CD4-positive, alpha-beta memory T cell (primary cell): ENCODE measurements at regions of chr20 and their contacts with region 1.

Region 1: DNA sequence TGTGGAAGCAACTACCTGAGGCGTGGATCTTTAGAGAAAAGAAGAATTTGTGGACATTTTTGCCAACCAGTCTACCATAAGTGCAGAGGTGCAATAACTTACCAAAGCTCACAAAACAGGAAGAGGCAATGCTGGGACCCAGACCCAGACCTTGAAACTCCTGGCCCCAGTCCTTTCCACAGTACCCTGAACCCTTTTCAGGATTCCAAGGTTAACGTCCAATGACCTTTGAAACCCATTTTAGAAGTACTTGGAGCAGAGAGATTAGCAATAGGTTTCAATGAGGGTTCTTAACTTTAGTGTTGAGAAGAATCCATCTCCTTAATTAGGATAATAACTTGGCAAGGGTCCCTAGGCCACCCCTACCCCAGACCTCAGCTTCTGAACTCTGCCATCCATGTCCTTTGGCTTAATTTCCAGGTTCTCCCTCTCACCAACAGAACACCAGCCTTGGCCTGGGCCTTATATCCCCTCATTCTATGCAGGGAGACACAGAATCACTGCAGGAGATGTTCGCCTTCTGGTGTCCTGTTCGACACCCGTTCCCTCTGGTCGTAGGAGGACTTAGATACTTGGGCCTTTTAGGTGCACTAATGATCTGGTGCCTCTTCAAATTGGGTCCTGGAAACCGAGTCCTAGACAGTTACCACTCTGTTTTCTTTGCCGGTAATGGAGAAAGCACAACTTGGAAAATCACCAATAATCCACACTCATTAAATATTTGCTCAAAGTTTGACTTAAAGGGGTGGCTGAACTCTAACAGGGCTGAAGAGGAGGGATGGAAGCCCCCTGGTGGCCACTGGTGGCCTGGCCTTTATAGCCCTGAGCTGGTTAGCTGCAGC is 40.6 kb downstream of the ISM1 start:
- DNase-seq: peak; percentile 58 to 66 (median 63)
- H3K4me3 ChIP-seq: no peak overlapping the region
- H3K4me3 Mint-ChIP-seq: no peak overlapping the region
- H3K27ac ChIP-seq: no peak overlapping the region
- H3K27ac Mint-ChIP-seq: peak overlapping the region in 1 of 7 donors; percentile 54
- H3K4me1 ChIP-seq: no peaks in the 10 kb centered on the region
- H3K4me1 Mint-ChIP-seq: peaks cover 7 to 14% (median 12%) of the 10 kb centered on the region in 4 donors
- H3K27me3 ChIP-seq: no peaks in the 10 kb centered on the region
- H3K27me3 Mint-ChIP-seq: peaks cover 0 to 1% of the 10 kb centered on the region in 2 donors

Region 2: DNA sequence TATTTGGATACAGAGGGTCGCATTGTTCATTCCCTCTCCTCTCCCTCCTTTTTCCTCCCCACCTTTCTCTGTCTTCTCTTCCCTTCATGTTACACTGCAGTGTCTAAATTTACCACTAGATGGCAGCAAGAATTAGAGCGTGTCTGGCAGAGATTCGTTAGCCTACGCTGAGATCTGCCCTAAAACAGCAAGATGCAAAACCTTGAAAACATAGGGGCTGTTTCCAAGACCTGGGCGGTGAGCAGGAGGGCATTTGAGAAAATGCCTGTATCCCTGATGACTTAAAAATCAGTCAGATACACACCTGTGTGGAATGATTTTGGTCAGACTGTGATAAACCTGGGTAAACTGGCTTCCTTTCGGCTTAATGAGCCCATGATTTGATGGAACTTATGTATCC is 142.1 kb before region 1 on chr20:
- CTCF ChIA-PET with region 1: interaction called, 146 read pairs
- POLR2A ChIA-PET with region 1: no interaction called
- intact Hi-C with region 1: loop called (anchors 1 kb)
- DNase-seq: peak; percentile 38 to 65 (median 63)
- H3K4me3 ChIP-seq: no peak overlapping the region
- H3K4me3 Mint-ChIP-seq: no peak overlapping the region
- H3K27ac ChIP-seq: no peak overlapping the region
- H3K27ac Mint-ChIP-seq: peak overlapping the region in 1 of 7 donors; percentile 7
- H3K4me1 ChIP-seq: no peaks in the 10 kb centered on the region
- H3K4me1 Mint-ChIP-seq: peaks cover 0 to 2% (median 0%) of the 10 kb centered on the region in 4 donors
- H3K27me3 ChIP-seq: no peaks in the 10 kb centered on the region
- H3K27me3 Mint-ChIP-seq: peaks cover 0 to 2% of the 10 kb centered on the region in 2 donors

Region 3: GRCh38 chr20:13221673-13222318 is 39.9 kb before region 1 on chr20:
- CTCF ChIA-PET with region 1: interaction called, 5 read pairs
- POLR2A ChIA-PET with region 1: interaction called, 5 read pairs
- intact Hi-C with region 1: loop called (anchors 1 kb)
- DNase-seq: peak; percentile 73 to 80 (median 78)
- H3K4me3 ChIP-seq: peak overlapping the region; percentile 52 to 60
- H3K4me3 Mint-ChIP-seq: peak overlapping the region; percentile 85 to 95 (median 88)
- H3K27ac ChIP-seq: peak overlapping the region; percentile 43
- H3K27ac Mint-ChIP-seq: peak overlapping the region; percentile 71 to 93 (median 89)
- H3K4me1 ChIP-seq: peaks cover 20% of the 10 kb centered on the region
- H3K4me1 Mint-ChIP-seq: peaks cover 7 to 31% (median 16%) of the 10 kb centered on the region in 4 donors
- H3K27me3 ChIP-seq: peaks cover 12% of the 10 kb centered on the region
- H3K27me3 Mint-ChIP-seq: peaks cover 6 to 20% of the 10 kb centered on the region in 2 donors

Region 4: DNA sequence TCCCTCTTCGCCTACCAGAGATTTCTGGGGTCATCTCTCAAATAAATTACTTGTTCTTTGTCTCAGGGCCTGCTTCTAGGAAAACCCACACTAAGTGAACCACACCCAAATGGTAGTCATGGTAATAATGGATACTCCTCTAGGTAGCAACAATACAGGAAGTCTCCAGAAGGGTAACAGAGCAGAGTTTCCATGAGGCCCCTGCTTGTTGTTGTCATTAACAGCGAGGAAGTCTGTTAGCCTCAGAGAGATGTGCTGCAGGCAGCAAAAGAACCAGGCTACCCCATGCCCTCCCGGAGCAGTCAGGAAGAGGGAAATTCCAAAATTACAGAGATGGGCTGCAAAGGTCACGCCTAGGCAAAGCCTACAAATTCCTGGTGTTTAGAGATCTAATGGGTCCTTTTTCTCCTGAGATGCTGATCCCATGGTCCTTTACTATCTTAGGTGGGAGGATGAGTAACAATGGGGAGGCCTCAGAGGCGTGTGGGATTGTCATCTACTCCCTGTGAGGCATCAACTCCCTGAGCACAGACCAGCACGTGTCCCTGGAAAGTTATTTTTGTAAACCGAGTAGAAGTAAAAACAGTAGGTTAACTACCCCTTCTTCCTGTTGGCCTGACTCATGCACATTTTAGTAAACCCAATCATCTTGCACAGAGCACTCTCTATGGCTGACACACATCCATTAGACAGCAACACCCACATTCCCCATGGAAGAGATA is 30.5 kb before region 1 on chr20:
- CTCF ChIA-PET with region 1: interaction called, 5 read pairs
- POLR2A ChIA-PET with region 1: no interaction called
- intact Hi-C with region 1: loop called (anchors 1 kb)
- DNase-seq: peak; percentile 68 to 86 (median 83)
- H3K4me3 ChIP-seq: peak overlapping the region in 1 of 2 donors; percentile 13
- H3K4me3 Mint-ChIP-seq: peak overlapping the region; percentile 32 to 83 (median 68)
- H3K27ac ChIP-seq: peak overlapping the region; percentile 83
- H3K27ac Mint-ChIP-seq: peak overlapping the region; percentile 89 to 99 (median 98)
- H3K4me1 ChIP-seq: peaks cover 44% of the 10 kb centered on the region
- H3K4me1 Mint-ChIP-seq: peaks cover 39 to 48% (median 43%) of the 10 kb centered on the region in 4 donors
- H3K27me3 ChIP-seq: no peaks in the 10 kb centered on the region
- H3K27me3 Mint-ChIP-seq: no peaks in the 10 kb centered on the region

Region 5: DNA sequence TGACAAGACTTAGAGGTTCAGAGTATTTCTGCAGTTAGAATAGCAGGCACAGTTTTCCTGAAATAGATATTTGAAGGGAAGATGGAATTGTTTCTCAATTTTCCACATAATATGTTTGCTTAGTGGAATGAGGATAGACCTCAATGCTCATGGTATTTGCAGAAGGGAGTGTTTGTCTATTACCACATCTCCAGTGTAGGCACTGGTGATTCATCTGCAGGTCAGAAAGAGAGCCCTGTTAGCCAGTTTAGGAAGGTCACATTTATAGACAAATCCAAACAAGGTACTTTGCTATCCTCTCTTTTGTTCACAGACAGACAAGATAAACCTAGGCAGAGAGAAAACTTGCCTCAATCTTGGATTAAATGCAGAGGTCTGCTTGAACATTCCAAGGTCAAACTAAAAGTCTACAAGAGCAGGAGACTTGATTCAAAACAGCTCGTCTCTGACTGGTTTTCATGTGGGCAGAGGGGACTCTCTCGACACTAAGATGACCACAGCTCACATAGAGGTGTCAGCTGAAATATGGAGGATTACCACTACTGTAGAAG is 17.8 kb before region 1 on chr20:
- CTCF ChIA-PET with region 1: interaction called, 26 read pairs
- POLR2A ChIA-PET with region 1: no interaction called
- intact Hi-C with region 1: loop called (anchors 1 kb)
- DNase-seq: no peak
- H3K4me3 ChIP-seq: no peak overlapping the region
- H3K4me3 Mint-ChIP-seq: no peak overlapping the region
- H3K27ac ChIP-seq: no peak overlapping the region
- H3K27ac Mint-ChIP-seq: no peak overlapping the region
- H3K4me1 ChIP-seq: peaks cover 28% of the 10 kb centered on the region
- H3K4me1 Mint-ChIP-seq: peaks cover 24 to 41% (median 31%) of the 10 kb centered on the region in 4 donors
- H3K27me3 ChIP-seq: no peaks in the 10 kb centered on the region
- H3K27me3 Mint-ChIP-seq: no peaks in the 10 kb centered on the region

Region 6: GRCh38 chr20:13251106-13251903 is 10.4 kb before region 1 on chr20:
- CTCF ChIA-PET with region 1: interaction called, 26 read pairs
- POLR2A ChIA-PET with region 1: no interaction called
- intact Hi-C with region 1: loop called (anchors 1 kb)
- DNase-seq: no peak
- H3K4me3 ChIP-seq: no peak overlapping the region
- H3K4me3 Mint-ChIP-seq: peak overlapping the region in 2 of 8 donors; percentile 17 to 34
- H3K27ac ChIP-seq: no peak overlapping the region
- H3K27ac Mint-ChIP-seq: peak overlapping the region in 6 of 7 donors; percentile 22 to 76 (median 59)
- H3K4me1 ChIP-seq: peaks cover 36% of the 10 kb centered on the region
- H3K4me1 Mint-ChIP-seq: peaks cover 28 to 53% (median 38%) of the 10 kb centered on the region in 4 donors
- H3K27me3 ChIP-seq: no peaks in the 10 kb centered on the region
- H3K27me3 Mint-ChIP-seq: no peaks in the 10 kb centered on the region

Region 7: DNA sequence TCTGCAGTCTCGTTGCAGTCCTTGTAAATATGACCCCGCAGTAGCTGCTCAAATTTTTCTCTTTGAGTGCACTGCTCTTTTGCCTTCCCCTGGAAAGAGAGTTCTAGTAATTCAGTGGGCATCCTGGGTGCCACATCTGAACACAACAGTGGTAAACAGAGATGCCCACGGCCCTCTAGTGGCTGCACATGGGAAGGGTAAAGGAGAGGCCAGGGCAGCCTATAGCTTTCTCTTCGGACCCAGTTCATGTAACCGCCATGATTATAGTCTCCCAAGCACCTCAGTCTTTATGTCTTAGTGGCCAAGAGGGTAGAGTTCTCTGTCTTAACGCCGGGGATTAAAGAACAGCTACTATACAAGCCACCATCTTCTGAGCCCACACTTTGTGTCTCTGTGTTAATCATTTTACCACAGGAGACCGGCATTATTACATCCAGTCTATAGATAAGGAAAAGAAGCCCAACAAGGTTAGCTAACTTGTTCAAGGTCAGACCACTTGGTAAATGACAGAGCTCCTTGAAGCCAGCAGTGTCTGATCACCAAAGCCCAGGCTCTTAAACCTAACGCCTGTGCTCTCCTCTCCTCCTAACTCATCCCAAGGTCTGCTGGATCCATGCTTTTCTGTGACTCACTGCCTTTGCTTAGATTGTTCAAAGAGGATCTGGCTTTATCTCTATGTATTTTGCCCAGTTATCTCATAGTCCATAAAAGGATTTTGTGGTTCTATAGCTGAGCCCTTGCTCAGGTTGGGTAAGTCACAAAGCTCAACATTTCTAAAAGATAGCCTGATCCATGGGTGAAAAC is 41.2 kb after region 1 on chr20:
- CTCF ChIA-PET with region 1: interaction called, 3 read pairs
- POLR2A ChIA-PET with region 1: no interaction called
- intact Hi-C with region 1: loop called (anchors 1 kb)
- DNase-seq: peak; percentile 22 to 49 (median 24)
- H3K4me3 ChIP-seq: no peak overlapping the region
- H3K4me3 Mint-ChIP-seq: no peak overlapping the region
- H3K27ac ChIP-seq: no peak overlapping the region
- H3K27ac Mint-ChIP-seq: no peak overlapping the region
- H3K4me1 ChIP-seq: no peaks in the 10 kb centered on the region
- H3K4me1 Mint-ChIP-seq: no peaks in the 10 kb centered on the region
- H3K27me3 ChIP-seq: no peaks in the 10 kb centered on the region
- H3K27me3 Mint-ChIP-seq: peaks cover 0 to 2% of the 10 kb centered on the region in 2 donors